ENCODE measurements at regions of chrX and their contacts with region 1.

Region 1: DNA sequence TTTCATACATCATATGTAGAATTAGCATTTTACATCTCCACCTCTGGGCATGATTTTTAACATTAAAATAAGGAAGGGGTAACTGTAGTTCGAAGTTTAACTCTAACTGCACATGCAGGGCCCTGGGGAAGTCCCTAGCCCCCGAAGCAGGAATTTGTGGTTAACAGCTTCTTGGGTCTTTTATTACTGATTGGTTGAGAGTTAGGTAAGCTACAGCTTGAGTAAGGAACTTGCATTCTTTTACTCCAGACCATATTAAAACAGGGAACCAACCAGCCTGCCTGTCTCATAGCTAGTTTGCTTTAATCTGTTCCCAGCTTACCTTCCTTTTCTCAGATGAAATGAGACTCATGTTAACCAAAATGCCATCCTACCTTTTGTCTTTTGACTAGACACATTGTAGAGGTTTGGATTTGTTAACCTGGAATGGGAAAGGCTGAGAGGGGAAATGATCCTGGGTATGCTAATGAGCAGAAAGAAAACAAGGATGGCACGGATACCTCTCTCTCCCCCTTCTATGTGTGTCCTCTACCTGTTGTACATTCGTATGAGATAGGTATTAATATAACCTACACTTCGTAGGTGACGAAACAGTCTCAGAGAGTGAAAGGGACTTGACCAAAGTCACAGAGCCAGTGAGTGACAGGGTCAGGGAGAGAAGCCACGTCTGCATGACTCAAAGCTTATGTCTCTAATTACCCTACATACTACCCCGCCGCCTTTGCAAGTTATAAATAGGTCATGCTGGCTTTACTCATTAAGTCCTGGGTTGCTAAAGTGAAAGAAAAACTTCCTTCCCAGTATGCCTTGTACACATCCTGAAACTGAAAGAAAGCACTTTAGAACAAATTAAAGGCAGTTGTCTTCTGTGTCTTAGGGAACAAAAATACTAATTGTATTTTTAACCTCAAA is 119.5 kb upstream of the AFF2 start:
- DNase-seq: peak; percentile 72
- ATAC-seq: peak; percentile 79
- H3K4me3 ChIP-seq: peak overlapping the region; percentile 8 to 66 (median 50)
- H3K4me3 Mint-ChIP-seq: peak overlapping the region; percentile 88
- H3K27ac ChIP-seq: peak overlapping the region; percentile 86 to 87
- H3K27ac Mint-ChIP-seq: peak overlapping the region; percentile 90
- H3K4me1 ChIP-seq: peaks cover 20 to 21% of the 10 kb centered on the region in 2 donors
- H3K4me1 Mint-ChIP-seq: peaks cover 27% of the 10 kb centered on the region
- H3K27me3 ChIP-seq: no peaks in the 10 kb centered on the region
- H3K27me3 Mint-ChIP-seq: no peaks in the 10 kb centered on the region
- CTCF ChIP-seq: no peak

Region 2: DNA sequence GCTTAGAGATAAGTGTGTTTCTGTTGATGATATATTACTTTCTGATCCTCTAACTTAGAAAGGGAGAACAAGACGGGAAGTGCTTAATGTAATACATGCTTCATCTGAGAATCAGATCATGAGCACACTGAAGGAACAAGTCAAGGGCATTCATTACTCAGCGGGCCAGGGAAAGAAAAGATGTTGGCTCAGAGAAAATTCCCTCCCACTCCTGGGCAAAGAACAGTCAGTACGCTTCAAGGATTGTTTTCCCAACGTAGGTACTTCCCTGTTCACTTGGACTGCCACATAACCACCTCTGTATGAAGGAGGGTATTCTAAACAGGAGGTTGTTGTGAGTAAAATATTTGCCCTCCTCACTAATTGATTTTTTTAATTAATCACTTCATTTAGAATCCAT is 843.7 kb before region 1 on chrX:
- CTCF ChIA-PET with region 1: no interaction called
- POLR2A ChIA-PET with region 1: no interaction called
- intact Hi-C with region 1: no loop called
- DNase-seq: no peak
- ATAC-seq: no peak
- H3K4me3 ChIP-seq: no peak overlapping the region
- H3K4me3 Mint-ChIP-seq: no peak overlapping the region
- H3K27ac ChIP-seq: no peak overlapping the region
- H3K27ac Mint-ChIP-seq: no peak overlapping the region
- H3K4me1 ChIP-seq: no peaks in the 10 kb centered on the region
- H3K4me1 Mint-ChIP-seq: no peaks in the 10 kb centered on the region
- H3K27me3 ChIP-seq: no peaks in the 10 kb centered on the region
- H3K27me3 Mint-ChIP-seq: no peaks in the 10 kb centered on the region
- CTCF ChIP-seq: no peak

Region 3: DNA sequence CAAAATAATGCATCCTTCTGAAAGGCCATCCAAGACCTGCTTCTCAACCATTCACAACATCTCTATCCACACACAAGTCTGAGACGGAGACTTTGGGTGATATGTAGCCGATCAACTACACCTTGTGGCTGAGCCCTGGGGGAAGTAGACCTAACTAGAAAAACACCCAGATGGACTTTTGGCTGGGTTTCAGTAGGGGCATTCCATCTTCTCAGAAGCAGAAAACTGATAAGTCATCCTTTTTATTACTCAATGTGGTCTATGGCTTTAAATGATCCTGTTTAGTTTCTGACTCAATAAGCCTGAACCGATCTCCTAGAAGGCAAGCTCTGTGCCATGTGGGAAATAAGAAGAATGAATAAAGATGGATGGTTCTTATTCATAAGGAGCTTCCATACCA is 37.0 kb after region 1 on chrX:
- CTCF ChIA-PET with region 1: no interaction called
- POLR2A ChIA-PET with region 1: no interaction called
- intact Hi-C with region 1: loop called (anchors 2 kb)
- DNase-seq: peak; percentile 3
- ATAC-seq: no peak
- H3K4me3 ChIP-seq: no peak overlapping the region
- H3K4me3 Mint-ChIP-seq: no peak overlapping the region
- H3K27ac ChIP-seq: no peak overlapping the region
- H3K27ac Mint-ChIP-seq: no peak overlapping the region
- H3K4me1 ChIP-seq: peaks cover 8 to 10% of the 10 kb centered on the region in 2 donors
- H3K4me1 Mint-ChIP-seq: peaks cover 15% of the 10 kb centered on the region
- H3K27me3 ChIP-seq: no peaks in the 10 kb centered on the region
- H3K27me3 Mint-ChIP-seq: no peaks in the 10 kb centered on the region
- CTCF ChIP-seq: no peak

Region 4: GRCh38 chrX:148459343-148459742 is 78.4 kb after region 1 on chrX:
- CTCF ChIA-PET with region 1: no interaction called
- POLR2A ChIA-PET with region 1: no interaction called
- intact Hi-C with region 1: loop called (anchors 2 kb)
- DNase-seq: peak; percentile 74
- ATAC-seq: peak; percentile 93
- H3K4me3 ChIP-seq: peak overlapping the region in 1 of 5 experiments; percentile 29
- H3K4me3 Mint-ChIP-seq: peak overlapping the region; percentile 71
- H3K27ac ChIP-seq: peak overlapping the region; percentile 47 to 78
- H3K27ac Mint-ChIP-seq: peak overlapping the region; percentile 91
- H3K4me1 ChIP-seq: peaks cover 32 to 37% of the 10 kb centered on the region in 2 donors
- H3K4me1 Mint-ChIP-seq: peaks cover 43% of the 10 kb centered on the region
- H3K27me3 ChIP-seq: no peaks in the 10 kb centered on the region
- H3K27me3 Mint-ChIP-seq: no peaks in the 10 kb centered on the region
- CTCF ChIP-seq: no peak

Region 5: DNA sequence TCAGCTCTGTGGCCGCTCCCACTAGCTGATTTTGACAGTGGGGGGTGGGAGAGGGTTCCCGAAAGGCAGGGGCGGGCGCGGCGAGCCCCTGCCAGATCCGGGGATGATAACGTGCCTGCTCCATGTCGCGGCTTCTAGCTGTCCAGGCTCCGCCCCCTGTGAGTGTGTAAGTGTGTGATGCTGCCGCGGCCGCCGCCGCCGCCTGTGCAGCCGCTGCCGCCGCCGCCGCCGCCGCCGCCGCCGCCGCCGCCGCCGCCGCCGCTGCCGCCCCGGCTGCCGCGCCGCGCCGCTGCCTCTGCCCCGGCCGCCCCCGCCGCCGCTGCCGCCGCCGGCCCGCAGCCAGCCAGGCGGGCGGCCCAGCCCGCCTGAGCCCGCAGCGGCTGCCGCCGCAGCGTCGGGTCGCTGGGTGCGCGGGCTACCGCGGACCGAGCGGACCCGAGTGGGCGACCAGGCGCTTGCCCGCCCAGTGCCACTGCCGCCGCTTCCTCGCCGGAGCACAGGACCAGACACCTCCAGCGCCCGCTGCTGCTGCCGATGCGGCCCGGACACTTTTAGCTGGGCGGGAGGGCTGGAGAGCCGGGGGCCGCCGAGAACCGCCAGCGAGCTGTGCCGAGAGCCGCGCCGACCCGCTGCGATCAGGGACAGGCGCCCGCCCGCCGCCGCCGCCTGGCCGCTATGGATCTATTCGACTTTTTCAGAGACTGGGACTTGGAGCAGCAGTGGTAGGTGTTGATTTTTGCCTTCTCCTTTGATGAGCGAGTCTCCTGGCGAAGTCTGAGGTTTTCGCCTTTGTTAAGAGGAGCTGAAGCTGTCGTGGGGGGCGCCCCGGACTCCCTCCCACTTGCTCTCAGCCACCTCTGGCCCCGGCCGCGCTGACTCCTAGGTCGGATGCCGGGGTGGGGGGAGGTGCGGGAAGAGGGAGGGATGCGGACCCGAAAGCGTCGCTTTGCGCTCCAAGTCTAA is 119.8 kb after region 1 on chrX and contains the start of gene AFF2:
- CTCF ChIA-PET with region 1: no interaction called
- POLR2A ChIA-PET with region 1: no interaction called
- intact Hi-C with region 1: loop called (anchors 2 kb)
- DNase-seq: peak; percentile 66
- ATAC-seq: peak; percentile 74
- H3K4me3 ChIP-seq: peak within 1 kb of the TSS; percentile 34 to 62 (median 51)
- H3K4me3 Mint-ChIP-seq: peak within 1 kb of the TSS; percentile 88
- H3K27ac ChIP-seq: no peak within 1 kb of the TSS
- H3K27ac Mint-ChIP-seq: peak within 1 kb of the TSS; percentile 20
- H3K4me1 ChIP-seq: peaks cover 10 to 16% of the 10 kb centered on the region in 2 donors
- H3K4me1 Mint-ChIP-seq: peaks cover 8% of the 10 kb centered on the region
- H3K27me3 ChIP-seq: peaks cover 0 to 27% (median 12%) of the 10 kb centered on the region in 4 experiments
- H3K27me3 Mint-ChIP-seq: peaks cover 9% of the 10 kb centered on the region
- CTCF ChIP-seq: no peak
- total RNA-seq, gene AFF2: 12.0 and 12.9 TPM in 2 replicates